ENCODE measurements at regions of chr5 and their contacts with region 1.

Region 1: GRCh38 chr5:14270209-14270702 is 127.1 kb downstream of the TRIO start:
- DNase-seq: no peak
- H3K4me3 Mint-ChIP-seq: no peak overlapping the region
- H3K27ac Mint-ChIP-seq: no peak overlapping the region
- H3K4me1 Mint-ChIP-seq: no peaks in the 10 kb centered on the region
- H3K27me3 Mint-ChIP-seq: peaks cover 9% of the 10 kb centered on the region

Region 2: GRCh38 chr5:13987843-13988464 is 282.3 kb before region 1 on chr5:
- intact Hi-C with region 1: loop called (anchors 2 kb)
- DNase-seq: peak; percentile 65
- H3K4me3 Mint-ChIP-seq: no peak overlapping the region
- H3K27ac Mint-ChIP-seq: no peak overlapping the region
- H3K4me1 Mint-ChIP-seq: no peaks in the 10 kb centered on the region
- H3K27me3 Mint-ChIP-seq: peaks cover 2% of the 10 kb centered on the region

Region 3: DNA sequence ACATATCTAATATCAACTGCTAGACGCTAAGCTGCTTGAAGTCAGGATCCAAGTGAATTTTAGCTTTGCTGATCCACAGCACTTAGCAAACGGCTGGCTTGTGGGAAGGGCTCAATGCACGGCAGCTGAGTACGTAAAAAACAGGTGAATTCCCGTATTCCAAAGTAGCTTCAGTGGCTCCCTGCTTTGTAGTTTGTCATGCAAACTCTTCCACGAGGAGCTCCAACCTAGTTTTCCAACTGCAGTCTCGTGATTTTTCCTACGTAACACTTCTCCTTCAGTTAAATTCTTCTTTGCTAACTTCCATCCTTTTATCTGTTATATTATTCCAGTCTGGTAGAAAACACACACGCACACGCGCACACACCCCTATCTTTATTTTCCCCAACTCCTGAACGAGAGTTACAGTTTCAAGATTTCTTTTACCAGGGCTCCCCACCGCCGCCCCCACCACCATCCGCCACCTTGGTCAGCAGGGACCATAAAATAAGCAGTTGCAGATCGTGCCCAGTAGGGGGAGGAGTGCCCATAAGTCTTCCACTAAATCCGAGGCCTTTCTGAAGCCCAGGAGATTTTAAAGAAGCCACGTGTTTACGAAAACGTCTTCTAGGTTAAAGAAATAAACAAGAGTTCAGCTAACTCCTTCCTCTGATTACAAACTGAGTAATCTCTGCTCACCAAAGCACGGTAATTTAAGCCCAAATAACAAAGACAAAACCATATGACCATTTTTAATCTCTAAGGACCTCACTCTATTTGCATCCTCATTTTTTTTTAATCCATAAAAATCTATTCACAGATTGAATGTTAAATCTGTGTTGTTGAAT is 161.9 kb before region 1 on chr5:
- intact Hi-C with region 1: loop called (anchors 2 kb)
- DNase-seq: peak; percentile 70
- H3K4me3 Mint-ChIP-seq: peak overlapping the region; percentile 16
- H3K27ac Mint-ChIP-seq: no peak overlapping the region
- H3K4me1 Mint-ChIP-seq: peaks cover 13% of the 10 kb centered on the region
- H3K27me3 Mint-ChIP-seq: peaks cover 4% of the 10 kb centered on the region

Region 4: DNA sequence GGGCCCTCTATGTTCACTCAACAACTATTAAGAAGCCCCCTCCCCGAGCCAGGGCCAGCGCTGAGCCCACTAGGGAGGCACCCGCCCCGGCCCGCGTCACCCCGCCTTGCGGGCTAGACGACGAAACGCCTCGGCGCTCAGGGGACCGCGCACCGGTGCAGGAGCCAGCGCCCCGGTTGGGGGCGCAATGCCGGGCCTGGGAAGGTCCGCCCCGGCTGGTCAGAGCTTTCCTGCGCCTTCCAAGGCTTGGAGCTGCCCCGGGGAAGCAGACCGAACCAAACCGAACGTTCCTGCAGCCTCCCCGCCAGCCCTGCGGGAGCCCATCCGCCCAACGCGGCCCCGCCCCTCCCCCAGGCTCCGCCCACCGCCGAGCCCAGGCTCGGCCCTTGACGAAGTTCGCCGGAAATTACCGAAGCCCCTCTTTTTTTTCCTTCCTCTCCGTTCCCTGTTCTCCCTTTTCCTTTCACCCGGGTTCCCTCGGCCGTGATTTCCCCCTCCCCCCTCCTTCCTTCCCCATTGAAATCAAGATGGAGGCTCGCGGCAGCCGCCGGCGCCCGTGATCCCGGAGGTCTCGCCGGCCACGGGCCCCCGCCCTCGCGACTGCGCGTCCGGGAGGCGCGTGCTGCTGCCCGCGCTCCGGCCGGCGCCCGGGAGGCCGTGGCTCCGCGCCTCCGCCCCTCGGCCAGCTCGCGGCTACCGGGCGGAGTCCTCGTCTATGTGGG is 127.3 kb before region 1 on chr5 and contains the start of gene TRIO:
- intact Hi-C with region 1: loop called (anchors 5 kb)
- DNase-seq: peak; percentile 94
- H3K4me3 Mint-ChIP-seq: peak within 1 kb of the TSS; percentile 87
- H3K27ac Mint-ChIP-seq: peak within 1 kb of the TSS; percentile 68
- H3K4me1 Mint-ChIP-seq: peaks cover 10% of the 10 kb centered on the region
- H3K27me3 Mint-ChIP-seq: peaks cover 58% of the 10 kb centered on the region
- total RNA-seq, gene TRIO: 8.7 and 14.0 TPM in 2 replicates

Region 5: DNA sequence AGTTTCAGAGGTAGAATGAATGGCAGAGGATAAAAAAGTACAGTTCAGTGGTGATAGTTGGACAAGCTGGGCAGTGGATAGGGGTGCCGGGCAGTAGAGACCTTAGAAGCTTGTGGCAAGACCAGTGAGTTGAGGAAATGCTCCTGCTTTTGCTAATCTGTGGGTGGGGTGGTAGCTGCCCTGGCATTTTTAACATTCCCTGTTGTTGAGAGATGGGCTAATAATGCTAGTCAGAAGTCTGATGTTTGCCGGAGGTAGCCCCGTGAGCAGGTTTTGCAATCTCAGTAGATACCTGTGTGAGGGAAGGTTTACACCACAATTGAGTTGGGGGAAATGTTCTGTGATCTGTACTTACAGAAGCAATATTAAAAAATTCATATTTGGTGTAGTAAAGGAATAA is 36.0 kb before region 1 on chr5:
- intact Hi-C with region 1: no loop called
- DNase-seq: no peak
- H3K4me3 Mint-ChIP-seq: no peak overlapping the region
- H3K27ac Mint-ChIP-seq: no peak overlapping the region
- H3K4me1 Mint-ChIP-seq: no peaks in the 10 kb centered on the region
- H3K27me3 Mint-ChIP-seq: peaks cover 7% of the 10 kb centered on the region

Region 6: DNA sequence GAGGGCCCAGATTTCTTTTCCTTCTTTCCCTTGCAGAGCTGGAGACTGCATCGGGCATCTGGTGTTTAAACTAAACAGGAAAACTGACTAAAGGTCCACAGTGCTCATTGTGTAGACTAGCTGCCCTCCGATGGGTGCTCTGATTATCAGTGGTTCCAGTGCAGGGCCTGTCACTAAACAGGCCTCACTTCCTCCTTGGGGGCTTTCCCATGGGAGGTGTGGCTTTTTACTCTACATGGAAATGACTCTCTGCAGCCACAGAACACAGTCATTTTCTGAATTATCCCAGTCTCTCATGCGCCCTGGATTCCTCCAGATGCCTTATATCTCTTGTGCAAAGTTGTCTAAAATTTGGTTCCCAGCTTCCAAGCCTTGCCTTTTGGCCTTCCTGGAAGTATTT is 72.0 kb after region 1 on chr5:
- intact Hi-C with region 1: no loop called
- DNase-seq: no peak
- H3K4me3 Mint-ChIP-seq: no peak overlapping the region
- H3K27ac Mint-ChIP-seq: no peak overlapping the region
- H3K4me1 Mint-ChIP-seq: peaks cover 3% of the 10 kb centered on the region
- H3K27me3 Mint-ChIP-seq: no peaks in the 10 kb centered on the region

Measured in activated CD4-positive, alpha-beta T cell treated with anti-CD3 and anti-CD28 coated beads, Interleukin-2, amount 10 ng/mL, durations not matched to agents 24 days and 14 days (primary cell).